K562 (cell line): ENCODE measurements at regions of chr20 and their contacts with region 1.

Region 1: GRCh38 chr20:59087829-59088433 is 45.3 kb upstream of the PRELID3B start:
- DNase-seq: peak; percentile 74 to 83 (median 78)
- ATAC-seq: peak; percentile 96
- H3K4me3 ChIP-seq: no peak overlapping the region
- H3K27ac ChIP-seq: no peak overlapping the region
- H3K4me1 ChIP-seq: no peaks in the 10 kb centered on the region
- H3K27me3 ChIP-seq: peaks cover 18 to 29% of the 10 kb centered on the region in 2 experiments
- CTCF ChIP-seq: peak; percentile 83 to 87 (median 86)
- EP300 ChIP-seq: no peak
- POLR2A ChIP-seq: no peak
- RAD21 ChIP-seq: peak; percentile 48 to 74; a peak in 3 of 4 replicates

Region 2: DNA sequence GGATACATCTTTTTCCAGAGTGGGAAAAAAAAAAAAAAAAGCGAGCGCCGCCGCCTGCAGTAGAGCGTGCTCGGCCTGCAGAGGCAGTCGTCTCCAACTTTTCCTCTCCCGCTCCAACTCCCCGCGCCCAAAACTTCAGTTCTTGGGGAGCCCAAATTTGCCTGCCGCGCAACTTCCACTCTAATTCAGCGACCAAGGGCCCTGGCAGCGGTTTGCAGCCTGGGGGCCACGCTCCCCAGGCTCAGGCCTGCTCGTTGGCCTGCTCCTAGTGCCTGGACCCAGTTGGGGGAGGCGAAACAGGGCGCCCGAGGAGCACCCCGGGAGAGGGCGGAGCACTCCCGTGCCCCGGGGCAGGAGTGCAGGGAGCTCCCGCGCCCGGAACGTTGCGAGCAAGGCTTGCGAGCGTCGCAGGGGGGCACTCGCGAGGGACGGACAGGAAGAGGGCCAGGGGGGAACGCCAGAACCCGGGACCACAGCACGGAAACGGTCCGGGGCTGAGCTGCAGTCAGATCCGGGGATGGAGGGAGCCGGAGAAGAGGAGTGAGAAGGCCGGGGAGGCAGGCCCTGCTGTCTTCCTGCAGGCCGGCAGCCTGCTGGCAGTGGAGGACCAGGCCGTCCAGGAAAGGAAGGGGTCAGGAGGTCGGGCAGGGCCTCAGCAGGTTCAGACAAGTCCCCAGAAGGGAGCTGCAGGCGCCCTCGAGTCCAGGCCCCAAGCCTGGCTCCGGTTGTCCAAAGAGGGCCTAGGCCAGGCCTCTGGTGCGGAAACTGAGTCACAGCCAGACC is 437.0 kb before region 1 on chr20 and contains the start of gene STX16:
- CTCF ChIA-PET with region 1: no interaction called
- POLR2A ChIA-PET with region 1: no interaction called
- in situ Hi-C with region 1: no loop called
- intact Hi-C with region 1: no loop called
- DNase-seq: peak; percentile 92 to 96 (median 94)
- ATAC-seq: peak; percentile 91
- H3K4me3 ChIP-seq: peak within 1 kb of the TSS; percentile 81
- H3K27ac ChIP-seq: peak within 1 kb of the TSS; percentile 91
- H3K4me1 ChIP-seq: peaks cover 10 to 20% of the 10 kb centered on the region in 2 experiments; a peak in 4 of 5 replicates
- H3K27me3 ChIP-seq: no peaks in the 10 kb centered on the region
- CTCF ChIP-seq: peak; percentile 68 to 75 (median 73)
- EP300 ChIP-seq: peak; percentile 56
- POLR2A ChIP-seq: peak; percentile 89
- RAD21 ChIP-seq: peak; percentile 48 to 51
- polyA plus RNA-seq, gene STX16: 4.4 to 4.9 TPM

Region 3: GRCh38 chr20:59207742-59208357 is 119.9 kb after region 1 on chr20:
- CTCF ChIA-PET with region 1: interaction called, 3 read pairs
- POLR2A ChIA-PET with region 1: no interaction called
- in situ Hi-C with region 1: no loop called
- intact Hi-C with region 1: loop called (anchors 1 kb)
- DNase-seq: peak; percentile 61 to 72 (median 64)
- ATAC-seq: peak; percentile 95
- H3K4me3 ChIP-seq: no peak overlapping the region
- H3K27ac ChIP-seq: no peak overlapping the region
- H3K4me1 ChIP-seq: no peaks in the 10 kb centered on the region
- H3K27me3 ChIP-seq: peaks cover 2 to 33% of the 10 kb centered on the region in 2 experiments; a peak in 4 of 5 replicates
- CTCF ChIP-seq: peak; percentile 73 to 87 (median 78)
- EP300 ChIP-seq: no peak
- POLR2A ChIP-seq: no peak
- RAD21 ChIP-seq: peak; percentile 63 to 86

Region 4: DNA sequence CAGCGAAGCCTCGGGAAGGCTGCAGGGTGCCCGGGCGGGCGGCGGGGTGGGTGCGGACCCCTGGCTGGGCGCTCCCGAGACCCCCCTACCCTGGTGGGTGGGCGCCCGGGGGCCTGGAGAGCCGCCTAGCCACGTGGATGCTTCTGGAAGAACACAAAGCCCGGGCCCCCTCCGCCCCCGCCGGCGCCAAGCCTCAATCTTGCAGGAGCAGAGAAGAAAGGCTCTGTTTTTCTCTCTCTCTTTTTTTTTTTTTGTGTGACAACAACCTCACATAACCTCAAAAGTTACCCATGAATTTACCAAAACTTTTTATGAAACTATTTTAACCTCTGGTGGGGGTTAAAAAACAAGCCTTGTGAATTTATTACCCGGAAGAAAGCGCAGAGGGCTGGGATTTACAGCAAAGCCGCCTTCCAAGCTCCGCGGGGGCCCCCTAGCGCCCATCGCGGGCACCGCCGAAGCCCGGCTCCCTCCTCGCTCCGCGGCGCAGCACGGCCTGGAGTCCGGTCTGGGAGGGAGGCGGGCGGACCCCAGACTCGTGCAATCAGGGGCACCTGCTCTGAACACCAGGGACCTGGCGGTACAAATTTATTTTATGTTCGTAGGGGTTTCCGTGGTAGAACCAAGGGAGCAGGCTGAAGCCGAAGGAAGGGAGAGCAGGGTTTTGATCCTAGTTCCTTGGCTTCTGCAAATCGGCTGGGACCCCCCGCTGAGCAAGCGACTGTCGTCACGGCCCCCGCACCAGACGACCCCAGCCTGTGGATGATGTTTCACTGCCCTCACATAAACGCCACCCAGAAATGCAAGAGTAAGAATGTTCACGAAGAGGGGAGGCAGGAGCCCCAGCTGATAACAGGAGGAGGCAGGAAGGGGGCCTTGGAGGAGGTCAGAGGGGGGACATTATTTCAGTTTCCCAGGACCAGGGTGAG is 134.6 kb after region 1 on chr20:
- CTCF ChIA-PET with region 1: interaction called, 7 read pairs
- POLR2A ChIA-PET with region 1: no interaction called
- in situ Hi-C with region 1: no loop called
- intact Hi-C with region 1: loop called (anchors 1 kb)
- DNase-seq: peak; percentile 76 to 86 (median 84)
- ATAC-seq: peak; percentile 100
- H3K4me3 ChIP-seq: peak overlapping the region; percentile 10; the same call in 1 of the 2 replicates
- H3K27ac ChIP-seq: no peak overlapping the region
- H3K4me1 ChIP-seq: peaks cover 0 to 9% of the 10 kb centered on the region in 2 experiments; a peak in 2 of 5 replicates
- H3K27me3 ChIP-seq: peaks cover 29 to 40% of the 10 kb centered on the region in 2 experiments
- CTCF ChIP-seq: peak; percentile 88 to 92 (median 91)
- EP300 ChIP-seq: no peak
- POLR2A ChIP-seq: no peak
- RAD21 ChIP-seq: peak; percentile 76 to 83

Region 5: DNA sequence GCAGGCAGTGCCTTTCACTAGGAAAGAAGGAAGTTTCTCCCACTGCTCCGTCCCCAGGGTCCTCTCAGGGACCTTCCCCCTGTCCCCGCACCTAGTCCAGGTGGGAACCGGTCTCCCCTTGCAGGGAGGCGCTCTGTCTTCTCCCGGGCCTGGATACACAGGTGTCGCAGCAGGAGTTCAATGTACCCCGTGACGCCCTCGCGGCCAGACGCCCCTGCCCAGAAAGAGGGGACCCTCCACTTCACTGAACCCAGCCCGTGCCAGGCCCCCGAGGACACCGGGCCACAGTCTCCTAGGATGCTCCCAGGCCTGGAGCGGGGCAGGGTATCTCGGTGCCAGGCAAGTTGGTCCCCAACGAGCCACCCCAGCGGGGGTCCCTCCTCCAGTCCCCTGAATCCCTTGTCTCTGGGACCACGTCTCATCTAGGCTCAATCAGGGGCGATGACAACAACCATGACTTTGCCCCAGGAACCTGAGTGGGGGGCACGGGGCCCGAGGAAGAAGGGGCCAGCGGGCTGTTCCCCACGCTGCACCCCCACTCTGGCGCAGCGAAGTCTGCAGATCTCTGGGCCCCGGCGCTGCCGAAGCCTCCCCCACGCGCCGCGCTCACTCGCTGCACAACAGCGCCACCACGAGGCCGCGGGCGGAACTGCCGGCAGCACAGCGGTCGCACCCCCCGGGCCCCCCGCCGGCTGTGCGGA is 315.5 kb after region 1 on chr20:
- CTCF ChIA-PET with region 1: no interaction called
- POLR2A ChIA-PET with region 1: no interaction called
- in situ Hi-C with region 1: no loop called
- intact Hi-C with region 1: loop called (anchors 1 kb)
- DNase-seq: peak; percentile 59 to 96 (median 92)
- ATAC-seq: peak; percentile 97
- H3K4me3 ChIP-seq: no peak overlapping the region
- H3K27ac ChIP-seq: no peak overlapping the region
- H3K4me1 ChIP-seq: peaks cover 0 to 9% of the 10 kb centered on the region in 2 experiments; a peak in 2 of 5 replicates
- H3K27me3 ChIP-seq: peaks cover 12 to 57% of the 10 kb centered on the region in 2 experiments; a peak in 4 of 5 replicates
- CTCF ChIP-seq: peak; percentile 87 to 91 (median 87)
- EP300 ChIP-seq: no peak
- POLR2A ChIP-seq: no peak
- RAD21 ChIP-seq: peak; percentile 67 to 87

Region 6: GRCh38 chr20:59412875-59413284 is 324.9 kb after region 1 on chr20:
- CTCF ChIA-PET with region 1: no interaction called
- POLR2A ChIA-PET with region 1: no interaction called
- in situ Hi-C with region 1: loop called (anchors 10 kb)
- intact Hi-C with region 1: no loop called
- DNase-seq: no peak
- ATAC-seq: no peak
- H3K4me3 ChIP-seq: no peak overlapping the region
- H3K27ac ChIP-seq: no peak overlapping the region
- H3K4me1 ChIP-seq: no peaks in the 10 kb centered on the region
- H3K27me3 ChIP-seq: peaks cover 5 to 35% of the 10 kb centered on the region in 2 experiments; a peak in 3 of 5 replicates
- CTCF ChIP-seq: no peak
- EP300 ChIP-seq: no peak
- POLR2A ChIP-seq: no peak
- RAD21 ChIP-seq: peak in 1 of 2 experiments; percentile 26; a peak in 1 of 4 replicates